ENCODE measurements at regions of chr2 and their contacts with region 1.

Region 1: DNA sequence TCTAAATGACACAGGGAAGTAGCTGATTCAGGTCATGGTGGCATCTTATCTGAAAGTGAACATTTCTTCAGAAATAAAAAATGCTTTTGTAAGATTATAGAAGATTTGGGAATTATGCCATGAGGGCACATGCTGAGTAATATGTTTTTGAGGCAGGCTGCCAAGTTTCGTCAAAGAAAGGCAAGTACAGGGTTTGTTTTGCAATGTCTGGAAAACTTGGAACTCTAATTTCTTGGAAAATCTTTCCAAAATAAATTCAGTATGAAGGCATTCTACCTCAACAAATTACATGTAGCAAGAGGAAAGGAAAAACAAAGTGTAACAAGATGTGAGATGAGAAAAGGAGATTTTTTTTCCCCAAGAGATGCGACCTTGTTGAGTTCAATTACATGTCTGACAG is 167.7 kb downstream of the PLCL1 start:
- DNase-seq: no peak
- ATAC-seq: peak; percentile 54
- H3K4me3 ChIP-seq: no peak overlapping the region
- H3K27ac ChIP-seq: no peak overlapping the region
- H3K4me1 ChIP-seq: peaks cover 4 to 12% of the 10 kb centered on the region in 2 donors
- H3K27me3 ChIP-seq: no peaks in the 10 kb centered on the region

Region 2: DNA sequence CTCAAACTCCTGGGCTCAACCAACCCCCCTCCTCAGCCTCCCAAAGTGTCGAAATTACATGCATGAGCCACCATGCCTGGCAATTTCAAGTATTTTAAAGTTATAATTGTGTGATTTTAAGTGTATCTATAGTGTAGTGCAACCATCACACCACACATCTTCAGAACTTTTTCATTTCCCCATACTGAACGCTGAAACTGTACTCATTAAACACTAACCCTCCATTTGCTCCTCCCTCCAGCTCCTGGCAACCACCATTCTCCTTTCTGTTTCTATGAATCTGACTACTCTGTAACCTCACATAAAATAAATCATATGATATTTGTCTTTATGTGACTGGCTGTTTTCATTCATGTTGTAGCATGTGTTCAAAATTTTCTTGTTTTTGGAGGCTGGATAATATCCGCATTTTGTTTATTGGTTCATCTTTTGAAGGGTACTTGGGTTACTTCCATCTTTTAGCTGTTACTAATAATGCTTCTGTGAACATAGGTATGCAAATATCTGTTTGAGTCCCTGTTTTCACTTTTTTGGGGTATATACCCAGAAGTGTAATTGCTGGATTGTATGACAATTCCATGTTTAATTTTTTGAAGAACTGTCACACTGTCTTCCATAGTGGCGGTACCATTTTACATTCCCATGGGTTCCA is 20.5 kb after region 1 on chr2:
- intact Hi-C with region 1: no loop called
- DNase-seq: no peak
- ATAC-seq: no peak
- H3K4me3 ChIP-seq: no peak overlapping the region
- H3K27ac ChIP-seq: no peak overlapping the region
- H3K4me1 ChIP-seq: peaks cover 0 to 8% of the 10 kb centered on the region in 2 donors
- H3K27me3 ChIP-seq: no peaks in the 10 kb centered on the region

Region 3: DNA sequence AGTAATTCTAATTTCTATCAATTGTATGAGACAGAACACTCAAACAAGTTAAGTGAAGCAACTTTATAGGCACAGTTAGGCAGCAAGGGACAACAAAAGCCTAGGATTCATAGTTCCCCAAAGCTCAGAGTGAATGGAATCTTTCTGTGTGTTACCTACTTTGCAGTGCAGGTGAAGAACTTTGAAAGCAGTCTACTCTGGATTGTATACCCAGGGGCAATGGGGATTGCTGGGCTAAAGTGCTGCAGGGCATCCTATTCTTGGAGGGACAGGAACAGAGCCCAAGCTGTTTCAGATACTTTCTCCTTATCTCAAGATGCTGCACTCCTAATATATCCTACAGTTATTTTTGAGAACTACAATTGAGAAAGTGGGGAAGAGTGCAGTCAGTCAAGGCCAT is 40.0 kb after region 1 on chr2:
- intact Hi-C with region 1: loop called in 1 of 2 experiments (anchors 5 kb)
- DNase-seq: no peak
- ATAC-seq: no peak
- H3K4me3 ChIP-seq: no peak overlapping the region
- H3K27ac ChIP-seq: no peak overlapping the region
- H3K4me1 ChIP-seq: peaks cover 0 to 6% of the 10 kb centered on the region in 2 donors
- H3K27me3 ChIP-seq: no peaks in the 10 kb centered on the region

Region 4: GRCh38 chr2:198100346-198100745 is 128.3 kb after region 1 on chr2:
- intact Hi-C with region 1: loop called (anchors 5 to 10 kb)
- DNase-seq: no peak
- ATAC-seq: peak; percentile 68
- H3K4me3 ChIP-seq: no peak overlapping the region
- H3K27ac ChIP-seq: peak overlapping the region in 1 of 2 donors; percentile 28
- H3K4me1 ChIP-seq: peaks cover 5 to 29% of the 10 kb centered on the region in 2 donors
- H3K27me3 ChIP-seq: no peaks in the 10 kb centered on the region